ENCODE measurements at regions of chr1 and their contacts with region 1.

Region 1: DNA sequence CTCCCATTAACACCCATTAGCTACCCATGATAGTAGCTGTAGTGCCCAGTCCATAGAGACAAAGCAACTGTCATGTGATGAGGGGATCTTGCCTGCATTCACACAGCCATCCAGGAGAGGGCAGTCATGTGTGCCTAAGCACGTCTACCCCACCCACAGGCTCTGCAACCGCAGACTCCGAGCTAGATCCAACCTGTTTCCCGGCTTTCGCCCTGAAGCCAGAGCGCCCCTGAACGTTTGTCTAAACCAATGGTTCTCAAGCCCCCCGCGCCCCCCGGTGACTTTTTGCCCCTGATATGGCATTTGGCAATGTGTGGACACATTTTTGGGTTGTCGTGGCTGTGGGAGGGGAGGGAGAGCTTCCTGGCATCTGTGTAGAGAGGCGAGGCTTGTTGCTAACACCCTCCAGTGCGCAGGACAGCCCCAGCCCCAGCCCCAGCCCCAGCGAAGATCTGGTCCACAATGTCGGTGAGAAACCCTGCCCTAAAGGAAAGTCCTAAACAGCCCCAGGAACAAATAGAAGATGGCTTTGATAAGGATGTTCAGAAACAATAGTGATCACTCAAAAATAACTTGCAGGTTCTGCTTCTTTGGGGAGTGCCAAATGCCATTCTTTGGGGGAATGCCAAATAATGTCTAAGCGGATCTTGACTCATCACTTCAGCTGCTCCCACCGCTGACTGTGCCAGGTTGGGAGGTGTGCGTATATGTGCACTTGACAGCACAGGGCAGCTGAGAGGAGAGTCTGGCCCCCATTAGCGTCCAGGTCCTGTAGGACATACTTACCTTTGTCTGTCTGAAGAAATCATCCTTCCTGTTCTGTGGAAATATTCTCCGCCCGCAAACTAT is 34.5 kb downstream of the SLC44A3 start:
- DNase-seq: peak; percentile 55
- H3K4me3 ChIP-seq: peak overlapping the region; percentile 56
- CTCF ChIP-seq: peak; percentile 94

Region 2: DNA sequence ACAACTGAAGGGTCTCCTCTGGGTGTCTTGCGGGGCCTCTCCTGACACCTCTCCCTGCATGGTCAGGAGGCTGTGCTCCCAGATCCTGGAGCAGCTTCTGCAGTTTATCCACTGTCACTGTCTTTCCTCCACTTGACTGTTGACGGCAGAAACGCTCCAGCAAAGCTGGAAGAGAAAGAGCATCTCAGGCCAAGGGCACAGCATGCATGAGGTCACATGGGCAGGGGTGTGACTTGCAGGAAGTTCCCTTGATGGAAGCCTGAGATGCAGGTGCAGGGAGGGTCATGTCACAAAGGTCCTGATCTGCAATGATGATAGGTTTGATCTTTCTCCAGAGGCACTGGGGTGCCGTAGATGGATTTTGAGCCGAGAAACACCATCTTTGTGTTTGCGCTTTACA is 11.3 kb before region 1 on chr1:
- CTCF ChIA-PET with region 1: interaction called, 48 read pairs
- POLR2A ChIA-PET with region 1: no interaction called
- DNase-seq: no peak
- H3K4me3 ChIP-seq: no peak overlapping the region
- CTCF ChIP-seq: no peak

Region 3: DNA sequence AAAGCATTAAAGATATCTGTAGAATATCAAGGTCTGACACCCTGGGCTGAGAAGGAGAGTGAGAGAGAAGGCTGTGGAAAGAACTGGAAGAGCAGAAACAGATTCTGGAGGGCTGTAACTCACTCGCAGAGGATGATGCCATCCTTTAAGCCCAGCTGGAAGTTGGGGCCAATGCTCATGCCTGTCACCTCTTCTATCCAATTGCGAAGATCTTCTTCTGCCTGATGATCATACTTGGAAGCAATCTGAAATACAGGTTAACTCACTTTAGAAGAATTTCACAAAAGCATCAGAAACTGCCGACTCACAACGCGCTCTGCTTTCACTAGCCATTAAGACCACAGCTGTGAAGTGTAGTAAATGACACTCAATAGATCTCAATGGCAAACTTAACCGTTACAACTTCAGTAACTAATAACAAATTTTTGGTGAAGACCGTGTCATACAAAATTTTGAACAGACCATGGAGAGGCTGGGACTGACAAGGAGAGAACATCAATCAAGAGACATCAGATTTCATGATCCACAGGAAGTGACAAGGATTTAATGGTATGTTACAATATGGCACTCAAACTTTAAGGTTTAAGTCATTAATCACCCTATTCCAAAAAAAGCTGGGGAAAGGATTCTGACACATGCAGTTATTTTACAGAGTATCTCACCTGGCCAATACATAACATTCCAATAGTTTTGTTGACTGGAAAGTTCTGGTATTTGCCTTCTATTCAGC is 48.8 kb after region 1 on chr1:
- CTCF ChIA-PET with region 1: interaction called, 84 read pairs
- POLR2A ChIA-PET with region 1: no interaction called
- DNase-seq: no peak
- H3K4me3 ChIP-seq: no peak overlapping the region
- CTCF ChIP-seq: no peak

Region 4: DNA sequence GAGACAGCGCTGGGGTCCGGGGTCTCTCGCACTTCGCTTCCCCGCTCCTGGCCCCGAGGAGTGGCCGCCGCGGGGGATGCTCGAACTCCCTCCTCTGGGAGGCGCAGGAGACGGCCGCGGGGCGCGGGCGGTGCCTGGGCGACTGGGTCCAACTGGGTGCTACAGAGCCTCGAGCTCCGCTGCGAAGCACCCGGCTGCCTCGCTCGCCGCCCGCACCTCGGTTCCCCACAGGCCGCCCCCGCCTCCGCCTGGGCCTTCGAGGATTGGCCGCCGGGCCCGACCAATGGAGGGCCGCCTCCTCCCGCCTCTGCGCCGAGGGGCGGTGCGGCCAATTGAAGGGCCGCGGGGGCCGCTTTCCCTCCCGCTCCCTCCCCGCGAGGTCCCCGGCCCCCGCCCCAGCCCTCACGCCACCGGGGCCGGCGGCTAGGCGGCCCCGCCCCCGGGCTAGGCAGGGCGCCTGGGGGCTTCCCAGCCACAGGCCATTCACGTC is 72.3 kb after region 1 on chr1 and contains the start of gene CNN3:
- CTCF ChIA-PET with region 1: interaction called, 63 read pairs
- POLR2A ChIA-PET with region 1: interaction called, 11 read pairs
- DNase-seq: peak; percentile 49
- H3K4me3 ChIP-seq: peak within 1 kb of the TSS; percentile 89
- CTCF ChIP-seq: peak; percentile 2